CD8-positive, alpha-beta T cell (primary cell): ENCODE measurements at regions of chr1 and their contacts with region 1.

Region 1: GRCh38 chr1:43367904-43368645 is at the start of gene ELOVL1:
- DNase-seq: peak; percentile 40 to 93 (median 85)
- ATAC-seq: peak; percentile 68
- H3K4me3 ChIP-seq: peak within 1 kb of the TSS; percentile 65 to 74
- H3K4me3 Mint-ChIP-seq: peak within 1 kb of the TSS; percentile 88
- H3K27ac ChIP-seq: peak within 1 kb of the TSS; percentile 63 to 78
- H3K27ac Mint-ChIP-seq: peak within 1 kb of the TSS; percentile 93
- H3K4me1 ChIP-seq: peaks cover 17% of the 10 kb centered on the region
- H3K4me1 Mint-ChIP-seq: peaks cover 42% of the 10 kb centered on the region
- H3K27me3 ChIP-seq: no peaks in the 10 kb centered on the region
- H3K27me3 Mint-ChIP-seq: no peaks in the 10 kb centered on the region
- CTCF ChIP-seq: no peak
- total RNA-seq, gene ELOVL1: 24.6 to 25.6 TPM

Region 2: GRCh38 chr1:42456010-42456758 is 911.9 kb before region 1 on chr1 and contains the starts of genes PPCS and ZMYND12:
- CTCF ChIA-PET with region 1: no interaction called
- POLR2A ChIA-PET with region 1: no interaction called
- intact Hi-C with region 1: loop called in 1 of 2 experiments (anchors 10 kb)
- DNase-seq: peak; percentile 82 to 98 (median 91)
- ATAC-seq: peak; percentile 92
- H3K4me3 ChIP-seq: peak within 1 kb of the TSS; percentile 99
- H3K4me3 Mint-ChIP-seq: peak within 1 kb of the TSS; percentile 98
- H3K27ac ChIP-seq: peak within 1 kb of the TSS; percentile 99 to 100
- H3K27ac Mint-ChIP-seq: peak within 1 kb of the TSS; percentile 100
- H3K4me1 ChIP-seq: peaks cover 25% of the 10 kb centered on the region
- H3K4me1 Mint-ChIP-seq: peaks cover 37% of the 10 kb centered on the region
- H3K27me3 ChIP-seq: no peaks in the 10 kb centered on the region
- H3K27me3 Mint-ChIP-seq: no peaks in the 10 kb centered on the region
- CTCF ChIP-seq: peak; percentile 34
- total RNA-seq, gene PPCS: 38.0 to 38.1 TPM
- total RNA-seq, gene ZMYND12: 0.56 to 0.76 TPM

Region 3: GRCh38 chr1:42931108-42931539 is 437.0 kb before region 1 on chr1:
- CTCF ChIA-PET with region 1: no interaction called
- POLR2A ChIA-PET with region 1: no interaction called
- intact Hi-C with region 1: loop called in 1 of 2 experiments (anchors 10 kb)
- DNase-seq: peak in 7 of 9 experiments; percentile 46 to 89 (median 67)
- ATAC-seq: peak; percentile 49
- H3K4me3 ChIP-seq: peak overlapping the region; percentile 22 to 43
- H3K4me3 Mint-ChIP-seq: peak overlapping the region; percentile 70
- H3K27ac ChIP-seq: peak overlapping the region; percentile 63 to 90
- H3K27ac Mint-ChIP-seq: peak overlapping the region; percentile 95
- H3K4me1 ChIP-seq: peaks cover 67% of the 10 kb centered on the region
- H3K4me1 Mint-ChIP-seq: peaks cover 67% of the 10 kb centered on the region
- H3K27me3 ChIP-seq: no peaks in the 10 kb centered on the region
- H3K27me3 Mint-ChIP-seq: no peaks in the 10 kb centered on the region
- CTCF ChIP-seq: peak; percentile 57

Region 4: DNA sequence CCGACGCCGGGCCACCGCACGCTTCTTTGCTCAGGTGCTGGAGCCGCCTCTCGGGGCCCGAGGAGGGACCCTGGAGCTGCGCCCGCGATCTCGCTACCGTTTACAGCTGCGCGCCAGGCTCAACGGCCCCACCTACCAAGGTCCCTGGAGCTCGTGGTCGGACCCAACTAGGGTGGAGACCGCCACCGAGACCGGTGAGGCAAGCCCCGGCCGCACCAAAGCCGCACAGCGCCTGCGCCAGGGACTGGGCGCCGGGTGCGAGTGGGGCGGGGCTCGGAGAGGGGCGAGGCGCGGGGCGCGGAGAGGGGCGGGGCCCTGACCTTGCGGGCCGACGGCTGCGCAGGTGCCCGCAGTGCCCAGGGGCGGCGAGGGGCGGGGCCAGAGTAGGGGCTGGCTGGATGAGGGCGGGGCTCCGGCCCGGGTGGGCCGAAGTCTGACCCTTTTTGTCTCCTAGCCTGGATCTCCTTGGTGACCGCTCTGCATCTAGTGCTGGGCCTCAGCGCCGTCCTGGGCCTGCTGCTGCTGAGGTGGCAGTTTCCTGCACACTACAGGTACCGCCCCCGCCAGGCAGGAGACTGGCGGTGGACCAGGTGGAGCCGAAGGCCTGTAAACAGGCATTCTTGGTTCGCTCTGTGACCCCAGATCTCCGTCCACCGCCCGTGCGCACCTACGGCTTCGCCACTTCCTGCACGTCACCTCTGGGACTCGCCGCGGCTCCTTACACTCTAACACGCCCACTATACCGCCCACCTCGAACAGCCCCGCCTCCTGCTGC is 19.1 kb before region 1 on chr1:
- CTCF ChIA-PET with region 1: interaction called, 7 read pairs
- POLR2A ChIA-PET with region 1: interaction called, 6 read pairs
- intact Hi-C with region 1: loop called in 1 of 2 experiments (anchors 1 kb)
- DNase-seq: peak; percentile 10 to 90 (median 71)
- ATAC-seq: peak; percentile 85
- H3K4me3 ChIP-seq: peak overlapping the region; percentile 43 to 44
- H3K4me3 Mint-ChIP-seq: peak overlapping the region; percentile 76
- H3K27ac ChIP-seq: peak overlapping the region; percentile 69 to 73
- H3K27ac Mint-ChIP-seq: peak overlapping the region; percentile 90
- H3K4me1 ChIP-seq: no peaks in the 10 kb centered on the region
- H3K4me1 Mint-ChIP-seq: peaks cover 13% of the 10 kb centered on the region
- H3K27me3 ChIP-seq: no peaks in the 10 kb centered on the region
- H3K27me3 Mint-ChIP-seq: no peaks in the 10 kb centered on the region
- CTCF ChIP-seq: no peak

Region 5: GRCh38 chr1:43383449-43383848 is 15.4 kb after region 1 on chr1:
- CTCF ChIA-PET with region 1: interaction called, 4 read pairs
- POLR2A ChIA-PET with region 1: interaction called, 13 read pairs
- intact Hi-C with region 1: loop called in 1 of 2 experiments (anchors 1 kb)
- DNase-seq: no peak
- ATAC-seq: no peak
- H3K4me3 ChIP-seq: no peak overlapping the region
- H3K4me3 Mint-ChIP-seq: no peak overlapping the region
- H3K27ac ChIP-seq: no peak overlapping the region
- H3K27ac Mint-ChIP-seq: no peak overlapping the region
- H3K4me1 ChIP-seq: peaks cover 6% of the 10 kb centered on the region
- H3K4me1 Mint-ChIP-seq: peaks cover 25% of the 10 kb centered on the region
- H3K27me3 ChIP-seq: no peaks in the 10 kb centered on the region
- H3K27me3 Mint-ChIP-seq: no peaks in the 10 kb centered on the region
- CTCF ChIP-seq: no peak

Region 6: GRCh38 chr1:43389326-43390313 is 21.5 kb after region 1 on chr1 and contains the starts of genes MED8 and SZT2:
- CTCF ChIA-PET with region 1: interaction called, 5 read pairs
- POLR2A ChIA-PET with region 1: interaction called, 13 read pairs
- intact Hi-C with region 1: loop called (anchors 1 kb)
- DNase-seq: peak; percentile 86 to 96 (median 92)
- ATAC-seq: peak; percentile 91
- H3K4me3 ChIP-seq: peak within 1 kb of the TSS; percentile 81 to 91
- H3K4me3 Mint-ChIP-seq: peak within 1 kb of the TSS; percentile 99
- H3K27ac ChIP-seq: peak within 1 kb of the TSS; percentile 70 to 86
- H3K27ac Mint-ChIP-seq: peak within 1 kb of the TSS; percentile 98
- H3K4me1 ChIP-seq: peaks cover 26% of the 10 kb centered on the region
- H3K4me1 Mint-ChIP-seq: peaks cover 57% of the 10 kb centered on the region
- H3K27me3 ChIP-seq: no peaks in the 10 kb centered on the region
- H3K27me3 Mint-ChIP-seq: no peaks in the 10 kb centered on the region
- CTCF ChIP-seq: no peak
- total RNA-seq, gene MED8: 18.8 to 20.2 TPM
- total RNA-seq, gene SZT2: 57.0 to 64.4 TPM

Region 7: DNA sequence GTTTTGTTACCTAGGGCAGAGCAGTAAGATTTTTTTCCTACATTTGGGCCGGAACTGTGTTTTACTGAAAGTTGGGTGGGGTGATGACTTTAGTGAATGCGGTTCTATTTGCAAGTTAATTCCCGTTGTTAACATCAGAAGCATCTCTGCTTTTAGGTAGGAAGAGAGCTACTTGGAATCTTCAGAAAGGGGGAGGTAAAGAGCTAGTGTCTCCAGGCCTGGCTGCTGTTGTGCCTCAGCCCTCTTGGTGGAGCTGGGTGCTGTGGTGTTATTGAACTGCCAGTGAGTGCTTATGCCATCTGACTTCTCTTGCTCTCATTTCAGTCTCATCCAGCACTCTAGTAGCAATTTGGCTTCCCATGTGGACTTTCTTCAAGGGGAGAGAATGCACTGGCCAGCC is 285.3 kb after region 1 on chr1:
- CTCF ChIA-PET with region 1: no interaction called
- POLR2A ChIA-PET with region 1: no interaction called
- intact Hi-C with region 1: no loop called
- DNase-seq: peak in 2 of 9 experiments; percentile 11 to 13
- ATAC-seq: no peak
- H3K4me3 ChIP-seq: no peak overlapping the region
- H3K4me3 Mint-ChIP-seq: no peak overlapping the region
- H3K27ac ChIP-seq: no peak overlapping the region
- H3K27ac Mint-ChIP-seq: peak overlapping the region; percentile 3
- H3K4me1 ChIP-seq: peaks cover 17% of the 10 kb centered on the region
- H3K4me1 Mint-ChIP-seq: peaks cover 41% of the 10 kb centered on the region
- H3K27me3 ChIP-seq: no peaks in the 10 kb centered on the region
- H3K27me3 Mint-ChIP-seq: no peaks in the 10 kb centered on the region
- CTCF ChIP-seq: no peak

Region 8: DNA sequence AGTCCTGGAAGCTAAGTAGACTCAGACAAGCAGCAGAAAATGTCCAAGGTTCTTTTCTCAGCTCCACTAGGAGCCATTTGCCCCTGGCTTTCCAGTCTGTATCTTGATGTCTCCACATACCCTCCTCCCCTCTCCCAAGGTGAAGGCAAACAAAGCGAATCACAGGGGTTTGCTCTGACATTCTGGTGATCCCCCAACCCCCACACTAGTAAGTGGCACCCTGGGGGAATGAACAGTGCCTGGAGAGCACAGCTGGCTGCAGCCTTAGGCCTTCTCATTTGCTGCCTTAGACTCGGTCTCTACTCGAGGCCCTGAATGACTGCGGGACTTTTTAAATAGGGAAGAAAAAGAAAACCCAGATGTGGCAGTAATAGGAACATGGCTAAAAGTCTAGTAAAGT is 971.7 kb after region 1 on chr1:
- CTCF ChIA-PET with region 1: no interaction called
- POLR2A ChIA-PET with region 1: no interaction called
- intact Hi-C with region 1: no loop called
- DNase-seq: no peak
- ATAC-seq: no peak
- H3K4me3 ChIP-seq: no peak overlapping the region
- H3K4me3 Mint-ChIP-seq: no peak overlapping the region
- H3K27ac ChIP-seq: no peak overlapping the region
- H3K27ac Mint-ChIP-seq: no peak overlapping the region
- H3K4me1 ChIP-seq: no peaks in the 10 kb centered on the region
- H3K4me1 Mint-ChIP-seq: peaks cover 13% of the 10 kb centered on the region
- H3K27me3 ChIP-seq: no peaks in the 10 kb centered on the region
- H3K27me3 Mint-ChIP-seq: no peaks in the 10 kb centered on the region
- CTCF ChIP-seq: no peak